ENCODE measurements at regions of chr1 and their contacts with region 1.

Region 1: GRCh38 chr1:154955718-154956543 is at the start of gene PBXIP1:
- DNase-seq: peak; percentile 92
- ATAC-seq: peak; percentile 82
- H3K4me3 ChIP-seq: peak within 1 kb of the TSS; percentile 81
- H3K27ac ChIP-seq: peak within 1 kb of the TSS; percentile 72
- H3K4me1 ChIP-seq: peaks cover 39% of the 10 kb centered on the region
- H3K27me3 ChIP-seq: no peaks in the 10 kb centered on the region
- CTCF ChIP-seq: peak; percentile 9 to 40 (median 22); a peak in 4 of 6 replicates
- EP300 ChIP-seq: no peak
- POLR2A ChIP-seq: peak; percentile 68
- RAD21 ChIP-seq: peak; percentile 25; the same call in 1 of the 2 replicates
- polyA plus RNA-seq, gene PBXIP1: 0.63 to 2.0 TPM

Region 2: GRCh38 chr1:154730259-154730658 is 225.7 kb before region 1 on chr1:
- CTCF ChIA-PET with region 1: no interaction called
- POLR2A ChIA-PET with region 1: no interaction called
- RAD21 ChIA-PET with region 1: no interaction called
- SMC1A ChIA-PET with region 1: no interaction called
- in situ Hi-C with region 1: no loop called
- intact Hi-C with region 1: no loop called
- DNase-seq: no peak
- ATAC-seq: no peak
- H3K4me3 ChIP-seq: no peak overlapping the region
- H3K27ac ChIP-seq: no peak overlapping the region
- H3K4me1 ChIP-seq: peaks cover 13% of the 10 kb centered on the region
- H3K27me3 ChIP-seq: no peaks in the 10 kb centered on the region
- CTCF ChIP-seq: no peak
- EP300 ChIP-seq: no peak
- POLR2A ChIP-seq: no peak
- RAD21 ChIP-seq: no peak

Region 3: GRCh38 chr1:154936555-154937084 is 19.3 kb before region 1 on chr1 and contains the start of gene PMVK:
- CTCF ChIA-PET with region 1: interaction called, 14 read pairs
- POLR2A ChIA-PET with region 1: interaction called, 18 read pairs
- RAD21 ChIA-PET with region 1: interaction called, 10 read pairs
- SMC1A ChIA-PET with region 1: interaction called, 6 read pairs
- in situ Hi-C with region 1: no loop called
- intact Hi-C with region 1: loop called (anchors 2 kb)
- DNase-seq: peak; percentile 84
- ATAC-seq: peak; percentile 79
- H3K4me3 ChIP-seq: peak within 1 kb of the TSS; percentile 87
- H3K27ac ChIP-seq: peak within 1 kb of the TSS; percentile 100
- H3K4me1 ChIP-seq: peaks cover 38% of the 10 kb centered on the region
- H3K27me3 ChIP-seq: no peaks in the 10 kb centered on the region
- CTCF ChIP-seq: peak; percentile 24 to 47 (median 41); a peak in 4 of 6 replicates
- EP300 ChIP-seq: peak; percentile 23 to 37; a peak in 3 of 4 replicates
- POLR2A ChIP-seq: peak; percentile 95
- RAD21 ChIP-seq: peak; percentile 7; the same call in 1 of the 2 replicates
- polyA plus RNA-seq, gene PMVK: 6.0 to 28.8 TPM

Region 4: GRCh38 chr1:154967331-154967950 is 11.5 kb after region 1 on chr1:
- CTCF ChIA-PET with region 1: interaction called, 14 read pairs
- POLR2A ChIA-PET with region 1: interaction called, 140 read pairs
- RAD21 ChIA-PET with region 1: interaction called, 16 read pairs
- SMC1A ChIA-PET with region 1: interaction called, 21 read pairs
- in situ Hi-C with region 1: no loop called
- intact Hi-C with region 1: no loop called
- DNase-seq: no peak
- ATAC-seq: no peak
- H3K4me3 ChIP-seq: no peak overlapping the region
- H3K27ac ChIP-seq: no peak overlapping the region
- H3K4me1 ChIP-seq: peaks cover 22% of the 10 kb centered on the region
- H3K27me3 ChIP-seq: no peaks in the 10 kb centered on the region
- CTCF ChIP-seq: no peak
- EP300 ChIP-seq: no peak
- POLR2A ChIP-seq: no peak
- RAD21 ChIP-seq: no peak

Region 5: GRCh38 chr1:154982897-154983648 is 27.1 kb after region 1 on chr1 and contains the start of gene FLAD1:
- CTCF ChIA-PET with region 1: interaction called, 10 read pairs
- POLR2A ChIA-PET with region 1: interaction called, 140 read pairs
- RAD21 ChIA-PET with region 1: interaction called, 5 read pairs
- SMC1A ChIA-PET with region 1: interaction called, 5 read pairs
- in situ Hi-C with region 1: no loop called
- intact Hi-C with region 1: no loop called
- DNase-seq: peak; percentile 100
- ATAC-seq: peak; percentile 100
- H3K4me3 ChIP-seq: peak within 1 kb of the TSS; percentile 96
- H3K27ac ChIP-seq: peak within 1 kb of the TSS; percentile 79
- H3K4me1 ChIP-seq: peaks cover 6% of the 10 kb centered on the region
- H3K27me3 ChIP-seq: no peaks in the 10 kb centered on the region
- CTCF ChIP-seq: no peak
- EP300 ChIP-seq: no peak
- POLR2A ChIP-seq: peak; percentile 66
- RAD21 ChIP-seq: no peak
- polyA plus RNA-seq, gene FLAD1: 22.9 to 30.1 TPM

Region 6: DNA sequence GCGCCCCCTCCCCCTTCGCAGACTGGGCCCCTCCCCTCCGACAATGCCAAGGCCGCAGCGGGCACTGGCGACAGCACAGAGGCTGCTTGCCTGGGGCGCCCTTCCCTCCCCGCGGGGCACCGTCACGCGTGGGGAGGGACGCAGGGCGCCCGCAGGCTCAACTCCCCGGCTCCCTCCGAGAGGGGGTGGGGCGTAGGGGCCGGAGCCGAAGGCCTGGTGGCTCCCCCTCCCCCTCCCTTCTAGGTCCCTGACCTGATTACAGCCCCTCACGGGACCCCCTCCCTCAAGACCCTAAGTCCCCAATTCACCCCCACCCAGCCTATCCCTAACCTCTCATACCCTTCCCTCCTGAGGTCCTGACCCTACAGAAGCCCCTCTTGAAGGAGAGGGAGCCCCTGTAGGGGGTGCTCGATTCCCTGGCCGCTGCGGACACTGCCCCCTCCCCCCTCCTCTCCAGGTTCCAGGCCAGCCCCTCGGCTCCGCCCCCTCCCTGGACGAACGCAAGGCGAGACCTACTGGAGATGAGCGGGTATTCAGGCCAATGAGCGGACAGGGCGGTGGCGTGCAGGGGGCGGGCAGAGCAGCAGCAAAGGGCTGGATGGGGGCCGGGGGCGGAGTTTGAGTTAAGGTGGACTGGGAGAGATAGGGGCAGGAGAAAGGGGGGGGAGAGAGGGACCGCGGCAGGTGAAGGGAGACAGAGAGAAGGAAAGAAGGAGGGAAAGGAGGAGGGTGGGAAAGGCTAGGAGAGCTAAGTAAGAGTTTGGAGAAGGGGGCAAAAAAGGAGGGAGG is 45.9 kb after region 1 on chr1:
- CTCF ChIA-PET with region 1: interaction called, 20 read pairs
- POLR2A ChIA-PET with region 1: interaction called, 5 read pairs
- RAD21 ChIA-PET with region 1: interaction called, 9 read pairs
- SMC1A ChIA-PET with region 1: interaction called, 8 read pairs
- in situ Hi-C with region 1: no loop called
- intact Hi-C with region 1: loop called (anchors 5 kb)
- DNase-seq: peak; percentile 94
- ATAC-seq: peak; percentile 76
- H3K4me3 ChIP-seq: peak overlapping the region; percentile 98
- H3K27ac ChIP-seq: peak overlapping the region; percentile 79
- H3K4me1 ChIP-seq: peaks cover 39% of the 10 kb centered on the region
- H3K27me3 ChIP-seq: no peaks in the 10 kb centered on the region
- CTCF ChIP-seq: peak; percentile 37 to 53 (median 51); a peak in 5 of 6 replicates
- EP300 ChIP-seq: no peak
- POLR2A ChIP-seq: peak; percentile 1; the same call in 1 of the 2 replicates
- RAD21 ChIP-seq: peak; percentile 32; the same call in 1 of the 2 replicates

Region 7: DNA sequence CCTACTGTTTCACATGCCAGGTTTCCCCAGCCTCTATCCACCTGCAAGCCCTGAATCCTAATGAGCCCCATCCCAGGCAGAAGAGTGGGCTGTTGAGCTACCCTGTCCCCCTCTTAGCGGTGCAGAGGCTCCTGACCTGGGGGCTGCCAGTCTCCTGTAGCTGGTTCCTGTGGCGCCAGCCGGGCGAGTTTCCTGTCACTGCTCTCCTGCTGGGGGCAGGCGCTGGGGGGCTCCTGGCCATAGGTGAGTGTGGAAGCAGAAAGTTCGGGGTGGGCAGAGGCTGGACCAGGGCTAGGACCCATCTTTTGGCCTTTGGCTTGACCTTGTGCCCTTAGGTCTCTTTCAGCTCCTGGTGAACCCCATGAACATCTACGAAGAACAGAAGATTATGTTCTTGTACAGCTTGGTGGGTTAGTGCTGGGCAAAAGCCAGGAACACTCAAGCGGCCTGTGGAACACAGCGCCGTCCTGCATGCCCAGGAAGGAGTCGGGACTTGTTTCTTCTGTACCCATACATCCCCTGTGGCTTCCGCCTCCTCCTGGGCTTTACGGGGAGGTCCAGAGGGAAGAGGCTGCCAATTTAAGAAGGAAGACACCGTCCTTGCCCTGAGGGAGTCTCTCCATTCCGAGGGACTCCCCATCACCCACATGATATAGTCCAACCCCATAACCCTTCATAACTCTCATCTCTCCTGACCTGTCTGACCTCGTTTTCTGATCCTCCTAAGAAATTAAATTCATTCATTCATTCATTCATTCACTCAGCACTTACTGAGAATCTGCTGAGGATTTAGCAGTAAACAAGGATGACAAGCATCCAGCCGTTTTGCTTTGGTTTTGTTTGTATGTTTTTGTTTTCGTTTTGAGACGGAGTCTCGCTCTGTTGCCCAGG is 78.6 kb after region 1 on chr1:
- CTCF ChIA-PET with region 1: no interaction called
- POLR2A ChIA-PET with region 1: no interaction called
- RAD21 ChIA-PET with region 1: no interaction called
- SMC1A ChIA-PET with region 1: no interaction called
- in situ Hi-C with region 1: no loop called
- intact Hi-C with region 1: no loop called
- DNase-seq: no peak
- ATAC-seq: no peak
- H3K4me3 ChIP-seq: no peak overlapping the region
- H3K27ac ChIP-seq: no peak overlapping the region
- H3K4me1 ChIP-seq: no peaks in the 10 kb centered on the region
- H3K27me3 ChIP-seq: peaks cover 2 to 5% of the 10 kb centered on the region in 2 experiments; a peak in 1 of 4 replicates
- CTCF ChIP-seq: no peak
- EP300 ChIP-seq: no peak
- POLR2A ChIP-seq: no peak
- RAD21 ChIP-seq: no peak

Region 8: DNA sequence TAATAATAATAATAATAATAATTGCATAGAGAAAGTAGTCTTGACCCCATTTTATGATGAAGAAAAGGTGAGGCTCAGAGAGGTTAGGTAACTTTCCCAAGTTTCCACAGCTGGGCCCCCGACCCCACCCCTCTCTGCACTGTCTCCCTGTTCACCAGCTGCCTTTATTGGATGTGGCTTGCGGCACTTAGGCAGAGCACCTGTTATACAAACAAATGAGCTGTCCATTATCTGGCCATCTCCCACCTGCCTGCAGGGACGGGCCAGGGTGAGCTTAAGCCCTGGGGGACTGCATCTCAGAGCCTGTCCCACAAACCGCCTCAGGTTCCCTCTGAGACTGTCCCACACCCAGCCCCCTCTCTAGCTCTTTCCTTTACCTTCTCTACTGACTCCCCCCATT is 161.7 kb after region 1 on chr1:
- CTCF ChIA-PET with region 1: no interaction called
- POLR2A ChIA-PET with region 1: no interaction called
- RAD21 ChIA-PET with region 1: no interaction called
- SMC1A ChIA-PET with region 1: no interaction called
- in situ Hi-C with region 1: no loop called
- intact Hi-C with region 1: no loop called
- DNase-seq: no peak
- ATAC-seq: no peak
- H3K4me3 ChIP-seq: no peak overlapping the region
- H3K27ac ChIP-seq: no peak overlapping the region
- H3K4me1 ChIP-seq: peaks cover 5% of the 10 kb centered on the region; the same call in 1 of the 2 replicates
- H3K27me3 ChIP-seq: peaks cover 0 to 2% of the 10 kb centered on the region in 2 experiments; a peak in 1 of 4 replicates
- CTCF ChIP-seq: no peak
- EP300 ChIP-seq: no peak
- POLR2A ChIP-seq: no peak
- RAD21 ChIP-seq: no peak